ENCODE measurements at regions of chr21 and their contacts with region 1.

Region 1: DNA sequence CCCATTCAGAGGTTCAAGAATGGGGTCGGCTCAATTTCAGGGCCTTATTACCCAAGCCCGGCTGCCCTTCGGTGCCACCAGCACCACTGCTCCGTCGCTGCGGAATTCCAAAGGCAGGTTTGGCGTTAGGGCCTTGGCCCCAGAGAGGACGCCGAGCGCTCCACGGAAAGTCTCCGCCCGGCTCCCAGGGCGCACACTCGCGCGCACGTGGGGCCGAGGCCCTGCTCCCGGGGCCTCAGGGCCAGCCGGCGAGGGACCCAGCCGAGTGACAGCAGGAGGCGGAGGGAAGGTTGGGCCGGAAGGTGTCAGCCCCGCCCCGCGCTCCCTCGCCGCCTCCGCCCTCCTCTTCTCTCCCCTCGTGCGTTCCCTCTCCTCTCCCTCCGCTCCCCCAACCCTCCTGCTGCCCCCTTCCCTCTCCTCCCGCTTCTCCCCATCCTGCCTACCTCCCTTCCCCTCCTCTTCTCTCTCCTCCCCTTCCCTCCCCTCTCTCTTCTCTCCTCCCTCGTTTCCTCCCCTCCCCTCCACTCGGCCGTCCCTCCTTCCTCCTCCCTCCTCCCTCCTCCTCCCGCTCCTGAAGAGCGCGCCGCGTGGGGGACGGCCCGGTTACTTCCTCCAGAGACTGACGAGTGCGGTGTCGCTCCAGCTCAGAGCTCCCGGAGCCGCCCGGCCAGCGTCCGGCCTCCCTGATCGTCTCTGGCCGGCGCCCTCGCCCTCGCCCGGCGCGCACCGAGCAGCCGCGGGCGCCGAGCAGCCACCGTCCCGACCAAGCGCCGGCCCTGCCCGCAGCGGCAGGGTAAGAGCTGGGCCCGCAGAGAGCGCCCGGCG is at the start of gene ETS2:
- DNase-seq: peak; percentile 89 to 90
- ATAC-seq: peak; percentile 87 to 89
- H3K4me3 ChIP-seq: peak within 1 kb of the TSS; percentile 74 to 94 (median 84)
- H3K27ac ChIP-seq: peak within 1 kb of the TSS; percentile 92 to 98 (median 97)
- H3K4me1 ChIP-seq: peaks cover 15 to 26% of the 10 kb centered on the region in 2 donors
- H3K27me3 ChIP-seq: no peaks in the 10 kb centered on the region
- CTCF ChIP-seq: peak in 2 of 5 experiments; percentile 24 to 30
- POLR2A ChIP-seq: peak; percentile 91 to 95
- total RNA-seq, gene ETS2: 51.5 to 136 (median 59.3) TPM

Region 2: DNA sequence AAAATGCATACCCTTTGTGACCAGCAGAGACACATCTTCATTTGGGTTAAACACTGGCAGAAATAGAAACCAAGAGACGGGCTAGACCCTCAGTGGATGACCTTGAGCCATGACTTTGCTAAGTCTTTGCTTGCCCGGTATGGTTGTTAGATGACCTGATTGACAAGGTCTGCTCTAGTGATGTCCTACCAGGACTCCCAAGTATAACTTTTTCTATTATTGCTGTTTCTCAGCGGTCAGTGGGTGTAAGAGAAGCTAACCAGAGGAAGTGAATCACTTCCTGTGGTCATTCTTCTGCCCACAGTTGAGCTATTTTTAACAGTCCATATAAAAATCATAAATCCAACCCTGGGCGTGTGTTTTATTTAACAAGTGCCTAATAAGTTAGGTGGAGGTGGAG is 126.0 kb before region 1 on chr21:
- in situ Hi-C with region 1: no loop called
- intact Hi-C with region 1: no loop called
- DNase-seq: no peak
- ATAC-seq: no peak
- H3K4me3 ChIP-seq: no peak overlapping the region
- H3K27ac ChIP-seq: no peak overlapping the region
- H3K4me1 ChIP-seq: peaks cover 0 to 3% of the 10 kb centered on the region in 2 donors
- H3K27me3 ChIP-seq: peaks cover 0 to 8% (median 6%) of the 10 kb centered on the region in 3 donors
- CTCF ChIP-seq: no peak
- POLR2A ChIP-seq: no peak

Region 3: GRCh38 chr21:38733973-38734546 is 71.5 kb before region 1 on chr21:
- in situ Hi-C with region 1: loop called in 1 of 4 experiments (anchors 5 kb)
- intact Hi-C with region 1: loop called (anchors 5 kb)
- DNase-seq: peak; percentile 64 to 72
- ATAC-seq: peak; percentile 87 to 94
- H3K4me3 ChIP-seq: peak overlapping the region; percentile 30 to 34 (median 32)
- H3K27ac ChIP-seq: peak overlapping the region; percentile 17 to 44 (median 36)
- H3K4me1 ChIP-seq: peaks cover 5 to 6% of the 10 kb centered on the region in 2 donors
- H3K27me3 ChIP-seq: peaks cover 0 to 3% (median 0%) of the 10 kb centered on the region in 3 donors
- CTCF ChIP-seq: peak; percentile 76 to 96 (median 92)
- POLR2A ChIP-seq: no peak

Region 4: GRCh38 chr21:38853421-38853919 is 47.9 kb after region 1 on chr21:
- in situ Hi-C with region 1: no loop called
- intact Hi-C with region 1: loop called (anchors 5 kb)
- DNase-seq: peak; percentile 96 to 99
- ATAC-seq: peak; percentile 87 to 88
- H3K4me3 ChIP-seq: no peak overlapping the region
- H3K27ac ChIP-seq: peak overlapping the region; percentile 86 to 88 (median 86)
- H3K4me1 ChIP-seq: peaks cover 22 to 43% of the 10 kb centered on the region in 2 donors
- H3K27me3 ChIP-seq: no peaks in the 10 kb centered on the region
- CTCF ChIP-seq: no peak
- POLR2A ChIP-seq: peak in 1 of 2 donors; percentile 19

Region 5: DNA sequence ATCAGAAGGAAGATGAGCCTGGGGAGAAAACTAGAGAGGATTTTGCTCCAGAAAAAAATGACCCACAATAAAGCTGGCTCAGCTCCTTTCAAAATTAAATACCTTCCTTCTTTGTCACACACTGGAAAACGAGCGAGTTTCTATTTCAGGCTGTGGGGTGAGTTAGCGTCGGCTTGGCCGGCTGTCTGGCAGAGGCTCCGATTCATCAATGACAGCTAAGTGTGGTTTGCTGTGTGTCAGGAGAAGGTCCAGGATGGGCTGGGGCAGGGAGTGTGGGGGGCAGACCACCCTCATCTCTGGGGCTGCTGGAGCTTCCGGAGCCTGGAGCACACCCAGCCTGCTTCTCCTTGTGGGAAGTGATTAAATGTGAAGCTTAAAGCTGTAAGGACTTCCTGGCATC is 120.4 kb after region 1 on chr21:
- in situ Hi-C with region 1: no loop called
- intact Hi-C with region 1: loop called (anchors 1 kb)
- DNase-seq: peak; percentile 62 to 74
- ATAC-seq: peak; percentile 96 to 98
- H3K4me3 ChIP-seq: peak overlapping the region; percentile 26 to 38 (median 34)
- H3K27ac ChIP-seq: peak overlapping the region; percentile 69 to 78 (median 75)
- H3K4me1 ChIP-seq: peaks cover 17% of the 10 kb centered on the region in 2 donors
- H3K27me3 ChIP-seq: no peaks in the 10 kb centered on the region
- CTCF ChIP-seq: no peak
- POLR2A ChIP-seq: peak in 1 of 2 donors; percentile 19

Region 6: DNA sequence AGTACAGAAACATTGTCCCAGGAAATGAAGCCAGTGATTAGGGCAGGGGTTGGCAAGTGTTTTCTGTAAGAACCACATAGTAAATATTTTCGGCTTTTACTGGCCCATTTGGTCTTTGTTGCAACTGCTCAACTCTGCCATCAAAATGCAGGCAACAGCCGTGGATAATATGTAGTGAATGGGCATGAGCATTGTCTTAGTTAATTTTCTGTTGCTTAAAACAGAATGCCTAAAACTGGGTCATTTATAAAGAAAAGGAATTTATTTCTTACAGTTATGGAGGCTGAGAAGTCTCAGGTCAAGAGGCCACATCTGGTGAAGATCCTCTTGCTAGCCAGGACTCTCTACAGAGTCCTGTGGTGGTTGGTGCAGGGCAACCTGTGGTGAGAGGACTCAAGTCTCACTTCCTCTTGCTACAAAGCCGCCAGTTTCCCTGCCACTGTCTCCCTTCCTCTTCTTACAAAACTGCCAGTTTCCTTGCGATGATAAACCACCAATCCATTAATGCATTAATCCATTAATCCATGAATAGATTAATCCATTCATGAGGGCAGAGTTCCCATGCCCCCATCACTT is 211.3 kb after region 1 on chr21:
- in situ Hi-C with region 1: loop called in 1 of 4 experiments (anchors 10 kb)
- intact Hi-C with region 1: loop called (anchors 2 kb)
- DNase-seq: no peak
- ATAC-seq: no peak
- H3K4me3 ChIP-seq: no peak overlapping the region
- H3K27ac ChIP-seq: no peak overlapping the region
- H3K4me1 ChIP-seq: no peaks in the 10 kb centered on the region
- H3K27me3 ChIP-seq: no peaks in the 10 kb centered on the region
- CTCF ChIP-seq: no peak
- POLR2A ChIP-seq: no peak

Region 7: GRCh38 chr21:39088831-39089380 is 283.4 kb after region 1 on chr21:
- in situ Hi-C with region 1: no loop called
- intact Hi-C with region 1: loop called (anchors 1 kb)
- DNase-seq: peak in 1 of 2 donors; percentile 53
- ATAC-seq: no peak
- H3K4me3 ChIP-seq: no peak overlapping the region
- H3K27ac ChIP-seq: peak overlapping the region; percentile 95 to 100 (median 97)
- H3K4me1 ChIP-seq: peaks cover 22 to 24% of the 10 kb centered on the region in 2 donors
- H3K27me3 ChIP-seq: no peaks in the 10 kb centered on the region
- CTCF ChIP-seq: peak in 1 of 5 experiments; percentile 33
- POLR2A ChIP-seq: no peak

Region 8: DNA sequence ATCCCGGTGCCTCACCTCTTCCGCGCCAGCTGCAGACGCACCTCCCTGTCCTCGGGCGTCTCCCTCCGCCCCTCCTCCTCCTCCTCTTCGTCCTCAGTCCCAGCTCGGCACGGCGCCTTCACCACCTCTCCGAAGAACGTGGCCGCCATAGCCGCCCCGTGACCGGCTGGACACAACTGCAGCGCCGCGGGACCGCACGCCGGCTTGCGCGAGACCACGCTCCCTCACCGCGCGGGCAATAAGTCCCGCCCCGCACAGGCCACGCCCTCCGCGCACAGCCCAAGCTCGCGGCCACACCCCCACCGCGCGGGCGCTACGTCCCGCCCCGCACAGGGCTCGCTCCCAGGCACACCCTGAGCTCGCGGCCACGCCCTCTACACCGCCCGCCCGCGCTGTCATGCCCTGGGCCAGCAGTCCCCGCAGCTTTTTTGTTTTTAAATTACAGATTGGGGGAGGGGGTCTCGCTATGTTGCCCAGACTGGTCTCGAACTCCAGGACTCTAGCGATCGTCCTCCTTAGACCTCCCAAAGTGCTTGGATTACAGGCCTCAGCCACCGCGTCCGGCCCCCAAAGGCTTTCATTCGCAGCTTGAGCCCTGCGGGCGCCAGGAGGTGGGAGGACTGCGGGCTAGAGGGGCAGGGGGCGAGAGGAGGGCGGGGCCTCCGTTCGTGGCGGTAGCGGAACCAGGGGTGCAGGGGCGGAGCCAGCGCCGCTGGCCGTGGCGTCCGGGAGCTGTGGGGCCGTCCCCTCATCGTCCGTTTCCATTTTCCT is 377.9 kb after region 1 on chr21 and contains the start of gene PSMG1:
- in situ Hi-C with region 1: no loop called
- intact Hi-C with region 1: loop called (anchors 5 kb)
- DNase-seq: peak; percentile 88 to 94
- ATAC-seq: peak; percentile 84 to 86
- H3K4me3 ChIP-seq: peak within 1 kb of the TSS; percentile 76 to 96 (median 82)
- H3K27ac ChIP-seq: peak within 1 kb of the TSS; percentile 88 to 97 (median 94)
- H3K4me1 ChIP-seq: peaks cover 7 to 8% of the 10 kb centered on the region in 2 donors
- H3K27me3 ChIP-seq: no peaks in the 10 kb centered on the region
- CTCF ChIP-seq: no peak
- POLR2A ChIP-seq: peak; percentile 88 to 92
- total RNA-seq, gene PSMG1: 12.9 to 53.5 (median 30.3) TPM